CD8-positive, alpha-beta T cell (primary cell): ENCODE measurements at regions of chr20 and their contacts with region 1.

Region 1: GRCh38 chr20:5191829-5192569 is 65.2 kb downstream of the CDS2 start:
- DNase-seq: peak in 6 of 9 experiments; percentile 5 to 79 (median 43)
- ATAC-seq: peak; percentile 80
- H3K4me3 ChIP-seq: no peak overlapping the region
- H3K4me3 Mint-ChIP-seq: no peak overlapping the region
- H3K27ac ChIP-seq: peak overlapping the region in 1 of 2 experiments; percentile 14
- H3K27ac Mint-ChIP-seq: peak overlapping the region; percentile 72
- H3K4me1 ChIP-seq: no peaks in the 10 kb centered on the region
- H3K4me1 Mint-ChIP-seq: peaks cover 3% of the 10 kb centered on the region
- H3K27me3 ChIP-seq: no peaks in the 10 kb centered on the region
- H3K27me3 Mint-ChIP-seq: no peaks in the 10 kb centered on the region
- CTCF ChIP-seq: peak; percentile 69

Region 2: DNA sequence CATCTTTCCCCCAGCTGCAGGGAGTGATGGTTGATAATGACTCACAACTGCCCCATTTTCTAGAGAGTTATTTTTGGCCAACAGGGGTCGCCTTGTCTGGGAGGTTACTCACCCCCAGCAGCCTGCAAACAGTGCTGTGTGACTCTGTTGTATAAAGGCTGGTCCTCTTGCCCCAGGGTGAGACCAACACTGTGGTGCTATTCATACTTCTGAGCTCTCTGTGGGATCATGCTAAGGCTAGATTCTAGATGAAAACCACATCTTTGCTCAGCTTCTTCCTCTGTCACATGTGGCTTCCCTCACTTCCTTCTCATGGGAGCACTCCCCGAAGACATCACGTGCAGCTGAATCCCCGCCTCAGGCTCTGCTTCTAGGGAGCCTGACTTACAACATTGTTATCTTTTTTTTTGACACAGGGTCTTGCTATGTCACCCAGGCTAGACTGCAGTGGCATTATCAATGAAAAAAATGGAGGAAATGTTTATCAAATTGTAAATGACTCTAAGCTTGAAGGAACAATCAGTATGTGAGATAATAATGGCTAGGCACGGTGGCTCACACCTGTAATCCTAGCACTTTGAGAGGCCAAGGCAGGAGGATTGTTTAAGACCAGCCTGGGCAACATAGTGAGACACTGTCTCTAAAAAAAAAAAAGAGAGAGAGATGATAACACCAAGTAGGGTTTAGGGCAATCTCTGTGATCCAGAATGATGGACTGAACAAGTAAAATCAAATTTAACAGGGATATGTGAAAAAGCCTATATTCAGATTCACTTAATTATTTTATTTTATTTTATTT is 135.0 kb before region 1 on chr20:
- CTCF ChIA-PET with region 1: no interaction called
- POLR2A ChIA-PET with region 1: no interaction called
- intact Hi-C with region 1: loop called in 1 of 2 experiments (anchors 1 kb)
- DNase-seq: peak; percentile 44 to 93 (median 80)
- ATAC-seq: peak; percentile 96
- H3K4me3 ChIP-seq: no peak overlapping the region
- H3K4me3 Mint-ChIP-seq: peak overlapping the region; percentile 19
- H3K27ac ChIP-seq: peak overlapping the region in 1 of 2 experiments; percentile 52
- H3K27ac Mint-ChIP-seq: peak overlapping the region; percentile 64
- H3K4me1 ChIP-seq: peaks cover 22% of the 10 kb centered on the region
- H3K4me1 Mint-ChIP-seq: peaks cover 21% of the 10 kb centered on the region
- H3K27me3 ChIP-seq: no peaks in the 10 kb centered on the region
- H3K27me3 Mint-ChIP-seq: no peaks in the 10 kb centered on the region
- CTCF ChIP-seq: peak; percentile 40

Region 3: DNA sequence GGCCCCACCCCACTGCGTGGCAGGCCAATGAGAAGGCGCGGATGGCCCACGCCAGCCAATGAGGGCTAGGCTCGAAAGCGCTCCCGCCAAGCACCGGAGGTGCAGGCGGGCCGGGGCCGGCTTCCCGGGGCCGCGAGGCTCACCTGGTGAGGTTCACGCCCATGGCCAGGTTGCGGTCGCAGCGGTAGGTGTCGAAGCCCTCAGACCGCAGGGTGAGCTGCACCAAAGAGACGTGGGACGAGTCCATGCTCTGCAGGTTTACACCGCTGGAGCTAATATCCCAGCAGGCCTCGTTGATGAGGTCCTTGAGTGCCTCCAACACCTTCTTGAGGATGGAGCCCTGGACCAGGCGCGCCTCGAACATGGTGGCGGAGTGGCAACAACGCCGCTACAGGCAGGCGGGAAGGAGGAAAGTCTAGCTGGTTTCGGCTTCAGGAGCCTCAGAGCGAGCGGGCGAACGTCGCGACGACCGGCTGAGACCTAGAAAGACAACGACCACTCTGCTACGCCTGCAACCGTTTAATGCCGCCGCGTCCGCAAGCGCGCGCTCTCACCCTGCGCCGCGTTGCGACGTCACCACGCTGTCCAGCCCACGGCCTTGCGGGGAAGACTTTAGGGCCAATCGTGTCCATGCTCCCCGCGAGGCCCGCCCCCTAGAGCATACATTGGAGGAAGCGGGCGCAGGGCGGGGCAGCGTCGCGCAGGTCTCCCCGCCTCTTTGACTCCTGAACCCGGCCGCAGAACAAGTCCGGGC is 72.4 kb before region 1 on chr20 and contains the start of gene PCNA:
- CTCF ChIA-PET with region 1: interaction called, 57 read pairs
- POLR2A ChIA-PET with region 1: interaction called, 9 read pairs
- intact Hi-C with region 1: no loop called
- DNase-seq: peak; percentile 89 to 98 (median 95)
- ATAC-seq: peak; percentile 94
- H3K4me3 ChIP-seq: peak within 1 kb of the TSS; percentile 89 to 95
- H3K4me3 Mint-ChIP-seq: peak within 1 kb of the TSS; percentile 95
- H3K27ac ChIP-seq: peak within 1 kb of the TSS; percentile 84 to 86
- H3K27ac Mint-ChIP-seq: peak within 1 kb of the TSS; percentile 97
- H3K4me1 ChIP-seq: peaks cover 20% of the 10 kb centered on the region
- H3K4me1 Mint-ChIP-seq: peaks cover 30% of the 10 kb centered on the region
- H3K27me3 ChIP-seq: no peaks in the 10 kb centered on the region
- H3K27me3 Mint-ChIP-seq: no peaks in the 10 kb centered on the region
- CTCF ChIP-seq: no peak
- total RNA-seq, gene PCNA: 40.2 to 40.6 TPM

Region 4: DNA sequence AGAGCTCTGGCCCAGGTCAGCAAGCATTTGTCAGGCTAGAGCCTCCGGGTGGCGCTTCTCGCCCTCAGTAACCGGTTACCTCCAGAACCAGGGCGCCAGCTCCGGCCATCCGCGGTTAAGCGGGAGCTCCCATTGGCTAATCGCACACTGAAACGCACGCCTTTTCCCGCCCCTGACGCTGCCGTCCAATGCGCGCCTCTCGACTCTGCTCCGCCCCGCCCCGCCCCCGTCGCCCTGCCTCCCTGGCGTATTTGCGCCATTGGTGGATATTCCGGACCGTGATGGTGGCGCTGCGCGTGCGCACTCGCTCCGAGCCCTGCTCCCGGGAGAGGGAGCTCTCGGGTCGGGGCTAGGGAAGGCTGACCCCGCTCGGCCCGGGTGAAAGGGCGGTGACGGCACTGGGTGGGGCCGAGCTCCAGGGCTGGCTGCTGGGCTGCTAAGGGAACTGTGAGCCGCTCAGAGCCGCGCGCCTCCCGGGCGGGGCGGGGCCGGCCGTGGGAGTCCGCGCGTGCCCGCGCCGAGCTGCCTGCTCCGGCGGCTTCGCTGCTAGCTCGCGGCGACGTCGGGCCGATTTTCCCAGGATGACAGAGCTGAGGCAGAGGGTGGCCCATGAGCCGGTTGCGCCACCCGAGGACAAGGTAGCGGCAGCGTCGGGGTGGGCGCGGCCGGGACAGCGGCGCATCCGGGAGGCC is 65.3 kb before region 1 on chr20 and contains the start of gene CDS2:
- CTCF ChIA-PET with region 1: interaction called, 57 read pairs
- POLR2A ChIA-PET with region 1: interaction called, 16 read pairs
- intact Hi-C with region 1: loop called (anchors 1 kb)
- DNase-seq: peak; percentile 99 to 100 (median 100)
- ATAC-seq: peak; percentile 81
- H3K4me3 ChIP-seq: peak within 1 kb of the TSS; percentile 68 to 83
- H3K4me3 Mint-ChIP-seq: peak within 1 kb of the TSS; percentile 95
- H3K27ac ChIP-seq: peak within 1 kb of the TSS; percentile 98 to 99
- H3K27ac Mint-ChIP-seq: peak within 1 kb of the TSS; percentile 99
- H3K4me1 ChIP-seq: peaks cover 26% of the 10 kb centered on the region
- H3K4me1 Mint-ChIP-seq: peaks cover 33% of the 10 kb centered on the region
- H3K27me3 ChIP-seq: no peaks in the 10 kb centered on the region
- H3K27me3 Mint-ChIP-seq: no peaks in the 10 kb centered on the region
- CTCF ChIP-seq: peak; percentile 54
- total RNA-seq, gene CDS2: 68.7 to 70.9 TPM

Region 5: DNA sequence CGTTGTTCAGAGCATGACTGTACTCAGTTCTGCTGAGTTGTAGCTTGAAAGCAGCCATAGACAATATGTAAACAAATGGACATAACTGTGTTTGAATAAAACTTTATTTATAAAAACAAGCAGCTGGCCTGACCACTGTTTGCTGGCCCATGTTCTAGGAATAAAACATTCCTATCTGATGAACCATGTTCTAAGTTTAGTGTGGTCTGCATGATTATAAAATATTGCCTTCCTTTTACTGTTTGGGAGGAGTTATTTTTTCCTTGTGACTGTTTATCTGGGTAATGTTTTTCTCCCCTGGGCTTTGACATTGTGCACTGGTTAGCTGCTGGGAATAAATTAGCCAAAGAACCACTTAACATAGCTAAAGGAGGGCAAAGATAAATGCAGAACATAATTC is 10.0 kb before region 1 on chr20:
- CTCF ChIA-PET with region 1: interaction called, 15 read pairs
- POLR2A ChIA-PET with region 1: interaction called, 3 read pairs
- intact Hi-C with region 1: no loop called
- DNase-seq: no peak
- ATAC-seq: no peak
- H3K4me3 ChIP-seq: no peak overlapping the region
- H3K4me3 Mint-ChIP-seq: no peak overlapping the region
- H3K27ac ChIP-seq: no peak overlapping the region
- H3K27ac Mint-ChIP-seq: no peak overlapping the region
- H3K4me1 ChIP-seq: no peaks in the 10 kb centered on the region
- H3K4me1 Mint-ChIP-seq: no peaks in the 10 kb centered on the region
- H3K27me3 ChIP-seq: no peaks in the 10 kb centered on the region
- H3K27me3 Mint-ChIP-seq: no peaks in the 10 kb centered on the region
- CTCF ChIP-seq: no peak

Region 6: GRCh38 chr20:5205348-5206210 is 13.6 kb after region 1 on chr20:
- CTCF ChIA-PET with region 1: interaction called, 47 read pairs
- POLR2A ChIA-PET with region 1: no interaction called
- intact Hi-C with region 1: no loop called
- DNase-seq: peak; percentile 37 to 79 (median 70)
- ATAC-seq: peak; percentile 99
- H3K4me3 ChIP-seq: no peak overlapping the region
- H3K4me3 Mint-ChIP-seq: no peak overlapping the region
- H3K27ac ChIP-seq: no peak overlapping the region
- H3K27ac Mint-ChIP-seq: no peak overlapping the region
- H3K4me1 ChIP-seq: no peaks in the 10 kb centered on the region
- H3K4me1 Mint-ChIP-seq: peaks cover 4% of the 10 kb centered on the region
- H3K27me3 ChIP-seq: no peaks in the 10 kb centered on the region
- H3K27me3 Mint-ChIP-seq: no peaks in the 10 kb centered on the region
- CTCF ChIP-seq: peak; percentile 83

Region 7: DNA sequence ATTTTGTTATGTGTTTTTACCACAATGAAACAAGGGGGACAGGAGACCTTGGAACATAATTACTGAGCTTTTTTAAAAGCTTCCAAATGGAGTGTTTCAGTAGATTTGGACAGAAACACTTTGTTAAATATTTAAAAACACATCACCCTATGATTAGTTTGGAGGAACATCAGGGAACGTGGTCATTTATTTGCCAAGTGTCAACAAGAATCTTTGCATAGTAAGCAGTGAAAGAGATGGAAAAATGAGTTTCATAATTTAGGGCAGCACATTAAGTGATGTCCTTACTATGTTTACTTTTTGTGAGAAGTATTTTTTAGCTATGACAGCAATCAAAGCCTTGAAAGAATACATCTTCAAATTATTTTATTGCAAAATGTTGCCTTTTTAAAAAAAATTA is 42.2 kb after region 1 on chr20:
- CTCF ChIA-PET with region 1: no interaction called
- POLR2A ChIA-PET with region 1: no interaction called
- intact Hi-C with region 1: no loop called
- DNase-seq: no peak
- ATAC-seq: no peak
- H3K4me3 ChIP-seq: no peak overlapping the region
- H3K4me3 Mint-ChIP-seq: no peak overlapping the region
- H3K27ac ChIP-seq: no peak overlapping the region
- H3K27ac Mint-ChIP-seq: no peak overlapping the region
- H3K4me1 ChIP-seq: no peaks in the 10 kb centered on the region
- H3K4me1 Mint-ChIP-seq: no peaks in the 10 kb centered on the region
- H3K27me3 ChIP-seq: no peaks in the 10 kb centered on the region
- H3K27me3 Mint-ChIP-seq: peaks cover 44% of the 10 kb centered on the region
- CTCF ChIP-seq: no peak